PC-9 (cell line): ENCODE measurements at regions of chr14 and their contacts with region 1.

Region 1: GRCh38 chr14:71212683-71213107 is 305.4 kb downstream of the PCNX1 start:
- DNase-seq: no peak
- H3K4me3 ChIP-seq: no peak overlapping the region
- H3K27ac ChIP-seq: no peak overlapping the region
- H3K4me1 ChIP-seq: no peaks in the 10 kb centered on the region
- H3K27me3 ChIP-seq: no peaks in the 10 kb centered on the region
- CTCF ChIP-seq: no peak

Region 2: GRCh38 chr14:70622111-70622712 is 590.5 kb before region 1 on chr14:
- CTCF ChIA-PET with region 1: interaction called, 17 read pairs
- POLR2A ChIA-PET with region 1: no interaction called
- intact Hi-C with region 1: no loop called
- DNase-seq: peak in 1 of 2 experiments; percentile 54
- H3K4me3 ChIP-seq: no peak overlapping the region
- H3K27ac ChIP-seq: no peak overlapping the region
- H3K4me1 ChIP-seq: peaks cover under 1% of the 10 kb centered on the region; the same call in 1 of the 2 replicates
- H3K27me3 ChIP-seq: no peaks in the 10 kb centered on the region
- CTCF ChIP-seq: peak; percentile 94

Region 3: DNA sequence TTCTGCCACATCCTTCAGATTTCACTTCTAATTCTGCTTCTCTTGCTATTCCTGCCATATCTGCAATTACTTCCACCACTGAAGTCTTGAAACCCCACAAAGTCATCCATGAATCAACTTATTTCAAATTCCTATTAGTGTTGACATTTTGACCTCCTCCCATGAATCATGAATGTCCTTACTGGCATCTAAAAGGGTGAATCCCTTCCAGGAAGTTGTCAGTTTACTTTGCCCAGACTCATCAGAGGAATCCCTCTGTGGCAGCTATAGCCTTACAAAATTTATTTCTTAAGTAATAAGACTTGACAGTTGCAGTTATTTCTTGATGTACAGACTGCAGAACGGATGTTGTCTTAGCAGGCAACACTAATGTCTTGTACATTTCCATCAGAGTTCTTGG is 142.5 kb before region 1 on chr14:
- CTCF ChIA-PET with region 1: no interaction called
- POLR2A ChIA-PET with region 1: no interaction called
- intact Hi-C with region 1: no loop called
- DNase-seq: no peak
- H3K4me3 ChIP-seq: no peak overlapping the region
- H3K27ac ChIP-seq: no peak overlapping the region
- H3K4me1 ChIP-seq: no peaks in the 10 kb centered on the region
- H3K27me3 ChIP-seq: no peaks in the 10 kb centered on the region
- CTCF ChIP-seq: no peak

Region 4: GRCh38 chr14:71319666-71320065 is 107.0 kb after region 1 on chr14:
- CTCF ChIA-PET with region 1: no interaction called
- POLR2A ChIA-PET with region 1: no interaction called
- intact Hi-C with region 1: no loop called
- DNase-seq: no peak
- H3K4me3 ChIP-seq: peak overlapping the region; percentile 97; the same call in 1 of the 2 replicates
- H3K27ac ChIP-seq: peak overlapping the region; percentile 99
- H3K4me1 ChIP-seq: peaks cover 34% of the 10 kb centered on the region
- H3K27me3 ChIP-seq: no peaks in the 10 kb centered on the region
- CTCF ChIP-seq: no peak